GM13976 (cell line): ENCODE measurements at regions of chr12 and their contacts with region 1.

Region 1: DNA sequence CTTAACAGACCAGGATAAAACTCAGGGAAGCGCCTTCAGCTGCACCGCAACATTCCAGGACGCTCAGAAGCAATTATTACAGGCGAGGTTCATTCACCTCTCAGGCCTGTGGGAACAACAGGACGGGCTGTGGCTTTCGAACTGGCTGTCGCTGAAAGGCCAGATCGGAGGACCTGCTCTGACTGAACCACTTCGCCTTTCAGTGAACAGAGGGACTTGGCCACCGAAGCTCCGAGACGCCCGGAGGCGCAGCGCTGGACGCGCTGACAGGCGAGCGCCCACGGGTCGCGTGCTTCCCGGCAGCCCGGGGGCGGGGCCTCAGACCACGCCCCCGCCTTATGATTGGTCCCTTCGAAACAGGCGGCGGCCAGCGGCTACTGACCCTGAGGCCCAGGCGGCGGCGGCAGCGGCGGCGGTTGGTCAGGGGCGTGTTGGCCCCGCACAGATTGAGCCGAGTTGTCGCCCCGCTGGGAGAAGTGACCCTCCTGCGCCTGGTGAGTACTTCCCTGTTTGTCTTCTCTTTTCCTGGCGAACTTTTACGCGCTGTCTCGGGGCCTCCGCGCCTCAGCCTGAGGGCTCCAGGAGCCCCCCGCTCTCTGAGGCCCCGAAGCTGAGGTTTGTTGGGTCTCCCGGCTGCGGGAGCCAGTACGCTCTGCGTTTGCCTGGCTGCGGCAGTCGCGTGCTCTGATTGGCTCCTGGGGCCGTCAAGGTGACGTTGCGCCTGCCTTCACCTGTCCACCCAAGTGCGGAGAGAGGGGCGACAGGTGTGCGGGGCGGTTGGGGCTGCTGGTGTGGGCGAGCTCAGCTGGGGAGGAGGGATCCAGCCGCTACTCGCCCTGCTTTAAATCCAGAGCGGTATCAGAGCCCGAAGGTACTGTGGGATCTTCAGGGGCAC is at the start of gene GAS2L3:
- DNase-seq: peak; percentile 92
- CTCF ChIP-seq: no peak

Region 2: GRCh38 chr12:100234598-100235304 is 338.8 kb before region 1 on chr12:
- in situ Hi-C with region 1: loop called (anchors 25 kb)
- DNase-seq: peak; percentile 40
- CTCF ChIP-seq: peak; percentile 70